ENCODE measurements at regions of chr3 and their contacts with region 1.

Region 1: GRCh38 chr3:69948246-69948862 is 51.2 kb upstream of the SAMMSON start:
- DNase-seq: peak; percentile 35
- ATAC-seq: no peak
- H3K4me3 ChIP-seq: no peak overlapping the region
- H3K27ac ChIP-seq: no peak overlapping the region
- H3K4me1 ChIP-seq: no peaks in the 10 kb centered on the region
- H3K27me3 ChIP-seq: no peaks in the 10 kb centered on the region
- CTCF ChIP-seq: peak; percentile 51; the same call in 1 of the 2 replicates

Region 2: GRCh38 chr3:69691860-69692259 is 256.5 kb before region 1 on chr3:
- CTCF ChIA-PET with region 1: interaction called, 4 read pairs
- POLR2A ChIA-PET with region 1: no interaction called
- intact Hi-C with region 1: loop called (anchors 1 kb)
- DNase-seq: no peak
- ATAC-seq: no peak
- H3K4me3 ChIP-seq: no peak overlapping the region
- H3K27ac ChIP-seq: no peak overlapping the region
- H3K4me1 ChIP-seq: peaks cover 11% of the 10 kb centered on the region
- H3K27me3 ChIP-seq: no peaks in the 10 kb centered on the region
- CTCF ChIP-seq: no peak

Region 3: GRCh38 chr3:69791919-69792399 is 156.4 kb before region 1 on chr3:
- CTCF ChIA-PET with region 1: interaction called, 4 read pairs
- POLR2A ChIA-PET with region 1: no interaction called
- intact Hi-C with region 1: loop called (anchors 2 kb)
- DNase-seq: peak; percentile 39
- ATAC-seq: peak; percentile 64
- H3K4me3 ChIP-seq: no peak overlapping the region
- H3K27ac ChIP-seq: no peak overlapping the region
- H3K4me1 ChIP-seq: peaks cover 9% of the 10 kb centered on the region
- H3K27me3 ChIP-seq: no peaks in the 10 kb centered on the region
- CTCF ChIP-seq: peak; percentile 54

Region 4: DNA sequence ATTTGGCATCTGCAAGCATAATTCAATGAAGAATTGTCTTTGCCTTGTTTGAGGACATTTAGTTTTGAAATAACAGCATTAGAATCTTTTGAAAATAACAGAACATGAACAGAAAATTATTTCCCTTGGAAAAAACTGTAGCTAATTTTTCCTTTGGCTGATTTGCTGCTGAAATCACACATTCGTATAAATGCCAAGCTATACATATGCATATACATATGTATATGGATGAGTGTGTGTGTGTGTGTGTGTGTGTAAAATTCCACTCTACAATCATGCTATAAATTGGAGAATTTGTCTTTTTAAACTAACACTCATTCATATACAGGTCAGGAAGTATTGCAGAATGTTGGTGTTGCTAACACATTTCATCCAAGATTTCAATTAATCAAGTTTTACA is 109.1 kb after region 1 on chr3:
- CTCF ChIA-PET with region 1: no interaction called
- POLR2A ChIA-PET with region 1: interaction called, 29 read pairs
- intact Hi-C with region 1: no loop called
- DNase-seq: no peak
- ATAC-seq: no peak
- H3K4me3 ChIP-seq: no peak overlapping the region
- H3K27ac ChIP-seq: no peak overlapping the region
- H3K4me1 ChIP-seq: no peaks in the 10 kb centered on the region
- H3K27me3 ChIP-seq: peaks cover 26% of the 10 kb centered on the region
- CTCF ChIP-seq: no peak

Region 5: GRCh38 chr3:70179111-70179510 is 230.8 kb after region 1 on chr3:
- CTCF ChIA-PET with region 1: no interaction called
- POLR2A ChIA-PET with region 1: no interaction called
- intact Hi-C with region 1: no loop called
- DNase-seq: no peak
- ATAC-seq: no peak
- H3K4me3 ChIP-seq: no peak overlapping the region
- H3K27ac ChIP-seq: no peak overlapping the region
- H3K4me1 ChIP-seq: no peaks in the 10 kb centered on the region
- H3K27me3 ChIP-seq: peaks cover 7% of the 10 kb centered on the region; the same call in 1 of the 2 replicates
- CTCF ChIP-seq: no peak